Posterior cingulate gyrus (tissue), 11 donors: ENCODE measurements at regions of chr10 and their contacts with region 1.

Region 1: GRCh38 chr10:69639291-69640195 is 9.5 kb downstream of the FAM241B start:
- DNase-seq: peak; percentile 37 to 96 (median 72)

Region 2: DNA sequence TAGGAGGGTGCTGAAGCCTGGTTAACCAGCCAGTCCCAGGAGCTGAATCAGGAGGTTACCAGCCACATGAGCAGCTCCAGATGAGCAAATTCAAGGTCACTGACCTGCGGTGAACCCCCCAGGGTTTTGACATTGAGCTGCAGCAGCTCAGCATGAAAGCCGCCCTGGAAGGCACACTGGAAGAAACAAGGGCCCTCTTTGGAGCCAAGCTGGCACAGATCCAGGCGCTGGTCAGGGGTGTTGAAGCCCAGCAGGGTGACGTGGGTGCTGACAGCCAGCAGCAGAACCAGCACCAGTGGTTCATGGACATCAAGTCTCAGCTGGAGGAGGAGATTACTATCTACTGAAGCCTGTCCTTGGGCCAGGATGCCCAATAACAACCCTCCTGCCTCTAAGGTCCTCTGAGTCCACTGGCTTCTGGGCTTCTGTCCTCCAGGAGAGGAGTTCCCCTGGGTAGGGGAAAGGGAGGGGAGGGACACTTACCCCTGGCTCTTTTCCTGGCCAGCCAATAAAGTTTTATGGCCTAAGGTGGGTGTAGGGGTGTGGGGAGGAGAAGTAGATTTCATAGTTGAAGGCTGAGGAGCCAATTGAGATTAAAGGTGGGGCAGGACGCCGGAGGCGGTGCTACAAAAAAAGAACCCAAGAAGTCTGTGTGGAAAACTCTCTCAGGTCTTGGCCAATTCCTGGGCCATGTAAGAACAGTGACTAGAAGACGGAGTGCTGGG is 1378.2 kb before region 1 on chr10:
- intact Hi-C with region 1: no loop called
- DNase-seq: peak in 7 of 10 donors; percentile 21 to 90 (median 65)

Region 3: GRCh38 chr10:69237528-69238159 is 401.9 kb before region 1 on chr10:
- intact Hi-C with region 1: loop called (anchors 1 kb)
- DNase-seq: peak; percentile 79 to 99 (median 94)

Region 4: GRCh38 chr10:69362468-69362954 is 277.0 kb before region 1 on chr10:
- intact Hi-C with region 1: no loop called
- DNase-seq: peak in 2 of 10 donors; percentile 77 to 78

Region 5: GRCh38 chr10:69408318-69409175 is 231.0 kb before region 1 on chr10:
- intact Hi-C with region 1: loop called (anchors 5 kb)
- DNase-seq: peak; percentile 78 to 99 (median 90)

Region 6: DNA sequence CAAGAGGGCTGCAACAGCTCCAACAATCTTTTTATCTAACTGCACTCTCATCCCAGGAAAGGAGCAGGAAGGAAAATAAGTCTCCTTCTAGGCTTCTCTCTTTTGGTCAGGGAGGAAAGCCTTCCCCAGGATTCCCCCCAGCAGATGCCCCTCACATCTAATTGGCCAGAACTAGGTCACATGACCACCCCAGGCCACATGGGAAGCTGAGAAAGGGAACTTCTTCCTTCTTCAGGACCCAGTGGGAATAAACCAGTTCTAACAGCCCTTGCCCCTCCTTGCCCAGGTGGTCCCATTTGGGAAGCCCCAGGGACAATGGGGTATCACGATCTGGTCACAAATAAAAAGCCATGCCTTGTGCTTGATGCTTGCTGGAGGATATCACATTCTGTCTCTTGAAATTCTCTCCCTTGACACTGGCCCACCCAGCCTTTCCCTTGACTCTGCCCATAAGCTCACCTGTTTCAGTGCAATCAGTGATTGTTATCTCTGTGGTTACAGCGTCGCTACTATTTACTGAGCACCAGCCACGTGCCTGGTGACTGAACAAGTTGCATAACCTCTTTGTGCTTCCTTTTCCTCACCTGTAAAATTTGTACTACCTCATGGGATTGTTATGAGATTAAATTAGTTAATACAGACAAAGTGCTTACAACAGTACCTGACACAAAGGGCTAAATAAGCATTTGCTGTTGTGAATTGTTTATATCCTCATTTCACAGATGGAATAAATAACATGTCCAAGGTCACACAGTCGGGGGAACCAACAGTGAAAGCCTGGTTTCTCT is 213.8 kb before region 1 on chr10:
- intact Hi-C with region 1: loop called (anchors 5 kb)
- DNase-seq: peak in 1 of 10 donors; percentile 2

Region 7: GRCh38 chr10:69515699-69516259 is 123.8 kb before region 1 on chr10:
- intact Hi-C with region 1: loop called (anchors 1 kb)
- DNase-seq: peak; percentile 51 to 96 (median 72)

Region 8: DNA sequence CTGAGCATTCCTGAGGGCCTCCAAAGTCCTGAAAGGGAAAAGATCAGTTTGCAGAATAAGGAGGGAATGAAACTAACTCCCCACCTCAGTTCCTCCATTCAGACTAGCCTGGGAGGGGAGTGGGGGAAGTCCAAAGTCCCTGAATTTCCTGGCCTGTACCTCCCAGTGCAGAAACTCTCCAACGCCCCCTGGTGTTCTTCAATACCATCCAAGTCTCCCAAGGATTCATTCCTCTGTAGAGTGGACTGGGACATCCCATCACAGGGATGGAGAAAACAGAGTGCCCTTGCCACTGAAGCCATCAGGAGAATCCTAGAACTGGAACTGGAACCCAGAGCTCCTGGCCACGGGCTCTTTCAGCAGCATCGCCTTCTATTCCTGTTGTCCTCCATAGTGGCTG is 160.6 kb after region 1 on chr10:
- intact Hi-C with region 1: loop called (anchors 10 kb)
- DNase-seq: peak in 2 of 10 donors; percentile 22